CD8-positive, alpha-beta T cell (primary cell): ENCODE measurements at regions of chr16 and their contacts with region 1.

Region 1: DNA sequence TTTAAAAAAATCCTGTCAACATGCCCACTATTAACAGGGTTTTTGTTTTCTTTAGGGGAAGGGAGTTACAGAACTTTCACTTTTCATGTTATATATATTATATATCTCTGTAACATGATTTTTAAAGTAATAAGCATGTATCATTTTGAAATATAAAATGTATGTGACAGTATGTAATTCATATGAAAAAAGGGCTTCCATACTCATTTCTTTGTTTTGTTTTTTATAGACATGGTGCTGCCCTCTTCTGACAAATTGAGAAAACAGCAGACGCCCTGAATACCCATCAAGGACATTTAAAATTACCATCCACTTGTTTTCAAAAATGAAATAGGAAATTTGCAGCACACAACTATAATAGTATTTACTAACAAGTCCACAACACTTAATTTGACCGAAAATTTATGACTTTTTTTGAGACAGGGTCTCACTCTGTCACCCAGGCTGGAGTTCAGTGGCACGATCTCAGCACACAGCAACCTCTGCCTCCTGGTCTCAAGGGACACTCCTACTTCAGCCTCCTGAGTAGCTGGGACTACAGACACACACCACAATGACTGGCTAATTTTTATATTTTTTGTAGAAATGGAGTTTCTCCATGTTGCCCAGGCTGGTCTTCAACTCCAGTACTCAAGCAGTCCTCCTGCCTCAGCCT is 30.4 kb downstream of the CFDP1 start:
- DNase-seq: peak in 2 of 9 experiments; percentile 41 to 50
- ATAC-seq: peak; percentile 44
- H3K4me3 ChIP-seq: no peak overlapping the region
- H3K4me3 Mint-ChIP-seq: no peak overlapping the region
- H3K27ac ChIP-seq: no peak overlapping the region
- H3K27ac Mint-ChIP-seq: no peak overlapping the region
- H3K4me1 ChIP-seq: no peaks in the 10 kb centered on the region
- H3K4me1 Mint-ChIP-seq: no peaks in the 10 kb centered on the region
- H3K27me3 ChIP-seq: no peaks in the 10 kb centered on the region
- H3K27me3 Mint-ChIP-seq: no peaks in the 10 kb centered on the region
- CTCF ChIP-seq: peak; percentile 61

Region 2: GRCh38 chr16:75361936-75362335 is 41.0 kb before region 1 on chr16:
- CTCF ChIA-PET with region 1: no interaction called
- POLR2A ChIA-PET with region 1: no interaction called
- intact Hi-C with region 1: no loop called
- DNase-seq: no peak
- ATAC-seq: no peak
- H3K4me3 ChIP-seq: no peak overlapping the region
- H3K4me3 Mint-ChIP-seq: no peak overlapping the region
- H3K27ac ChIP-seq: no peak overlapping the region
- H3K27ac Mint-ChIP-seq: no peak overlapping the region
- H3K4me1 ChIP-seq: no peaks in the 10 kb centered on the region
- H3K4me1 Mint-ChIP-seq: no peaks in the 10 kb centered on the region
- H3K27me3 ChIP-seq: no peaks in the 10 kb centered on the region
- H3K27me3 Mint-ChIP-seq: no peaks in the 10 kb centered on the region
- CTCF ChIP-seq: no peak

Region 3: GRCh38 chr16:75392911-75393310 is 10.0 kb before region 1 on chr16:
- CTCF ChIA-PET with region 1: interaction called, 11 read pairs
- POLR2A ChIA-PET with region 1: no interaction called
- intact Hi-C with region 1: no loop called
- DNase-seq: no peak
- ATAC-seq: no peak
- H3K4me3 ChIP-seq: no peak overlapping the region
- H3K4me3 Mint-ChIP-seq: no peak overlapping the region
- H3K27ac ChIP-seq: no peak overlapping the region
- H3K27ac Mint-ChIP-seq: no peak overlapping the region
- H3K4me1 ChIP-seq: no peaks in the 10 kb centered on the region
- H3K4me1 Mint-ChIP-seq: no peaks in the 10 kb centered on the region
- H3K27me3 ChIP-seq: no peaks in the 10 kb centered on the region
- H3K27me3 Mint-ChIP-seq: no peaks in the 10 kb centered on the region
- CTCF ChIP-seq: no peak